CD4-positive, alpha-beta T cell (primary cell): ENCODE measurements at regions of chr9 and their contacts with region 1.

Region 1: DNA sequence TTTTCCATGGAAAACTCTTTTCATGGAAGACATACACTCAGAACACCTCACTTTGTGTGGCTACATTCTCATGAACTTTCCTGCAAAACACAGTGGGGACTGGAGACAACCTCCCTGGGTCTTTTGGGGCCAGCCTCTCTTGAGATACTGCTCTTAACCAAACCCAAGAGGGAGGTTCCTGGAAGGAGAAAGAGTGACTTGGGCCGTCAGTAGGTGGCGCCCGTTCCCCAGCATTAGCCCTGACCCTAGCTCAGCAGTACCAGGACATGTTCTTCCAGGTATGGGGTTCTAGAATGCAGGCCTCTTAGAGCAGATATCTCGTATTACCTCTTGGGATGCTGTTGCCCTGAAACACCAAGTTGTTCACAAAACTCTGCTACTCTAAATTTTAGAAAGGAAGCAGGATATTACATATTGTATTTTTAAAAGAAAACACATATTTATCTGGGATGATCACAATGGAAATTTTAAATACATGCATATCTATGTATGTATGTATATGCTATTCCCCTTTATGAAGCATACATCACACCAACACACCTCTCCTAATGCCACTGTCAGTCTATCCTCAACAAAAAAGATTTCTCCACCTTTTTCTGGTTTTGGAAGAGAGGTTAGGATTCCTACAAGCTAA is 15.8 kb upstream of the GLIS3 start:
- DNase-seq: peak; percentile 52 to 83 (median 64)
- ATAC-seq: peak; percentile 90
- H3K4me3 ChIP-seq: no peak overlapping the region
- H3K4me3 Mint-ChIP-seq: no peak overlapping the region
- H3K27ac ChIP-seq: no peak overlapping the region
- H3K27ac Mint-ChIP-seq: no peak overlapping the region
- H3K4me1 ChIP-seq: no peaks in the 10 kb centered on the region
- H3K4me1 Mint-ChIP-seq: no peaks in the 10 kb centered on the region
- H3K27me3 ChIP-seq: no peaks in the 10 kb centered on the region
- H3K27me3 Mint-ChIP-seq: no peaks in the 10 kb centered on the region
- CTCF ChIP-seq: peak; percentile 78

Region 2: DNA sequence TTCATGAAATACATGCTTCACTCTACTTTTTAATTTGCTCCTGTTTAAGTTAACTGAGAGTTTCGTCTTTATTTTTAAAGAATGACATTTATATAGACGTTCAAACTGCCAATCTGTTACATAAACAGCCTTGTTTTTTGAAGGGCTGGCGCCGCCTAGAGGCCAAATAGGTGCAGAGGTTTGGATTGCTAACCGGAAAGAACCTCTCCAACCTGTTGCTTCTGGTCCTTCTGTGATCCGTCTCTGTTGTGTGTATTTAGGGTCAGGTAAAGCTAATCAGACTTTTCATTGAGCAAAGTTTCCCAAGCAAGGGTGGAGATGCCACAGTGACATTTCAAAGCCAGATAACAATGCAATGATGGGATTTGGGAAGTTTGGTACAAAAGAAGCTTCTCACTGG is 23.7 kb after region 1 on chr9:
- CTCF ChIA-PET with region 1: interaction called, 5 read pairs
- POLR2A ChIA-PET with region 1: no interaction called
- intact Hi-C with region 1: loop called (anchors 1 to 2 kb)
- DNase-seq: peak; percentile 65 to 85 (median 75)
- ATAC-seq: peak; percentile 94
- H3K4me3 ChIP-seq: no peak overlapping the region
- H3K4me3 Mint-ChIP-seq: peak overlapping the region; percentile 26
- H3K27ac ChIP-seq: no peak overlapping the region
- H3K27ac Mint-ChIP-seq: peak overlapping the region; percentile 44
- H3K4me1 ChIP-seq: peaks cover 4% of the 10 kb centered on the region
- H3K4me1 Mint-ChIP-seq: peaks cover 7% of the 10 kb centered on the region
- H3K27me3 ChIP-seq: no peaks in the 10 kb centered on the region
- H3K27me3 Mint-ChIP-seq: no peaks in the 10 kb centered on the region
- CTCF ChIP-seq: peak; percentile 85

Region 3: GRCh38 chr9:4353236-4353635 is 37.5 kb after region 1 on chr9:
- CTCF ChIA-PET with region 1: no interaction called
- POLR2A ChIA-PET with region 1: no interaction called
- intact Hi-C with region 1: no loop called
- DNase-seq: no peak
- ATAC-seq: no peak
- H3K4me3 ChIP-seq: no peak overlapping the region
- H3K4me3 Mint-ChIP-seq: no peak overlapping the region
- H3K27ac ChIP-seq: no peak overlapping the region
- H3K27ac Mint-ChIP-seq: no peak overlapping the region
- H3K4me1 ChIP-seq: no peaks in the 10 kb centered on the region
- H3K4me1 Mint-ChIP-seq: no peaks in the 10 kb centered on the region
- H3K27me3 ChIP-seq: no peaks in the 10 kb centered on the region
- H3K27me3 Mint-ChIP-seq: peaks cover 4% of the 10 kb centered on the region
- CTCF ChIP-seq: no peak

Region 4: DNA sequence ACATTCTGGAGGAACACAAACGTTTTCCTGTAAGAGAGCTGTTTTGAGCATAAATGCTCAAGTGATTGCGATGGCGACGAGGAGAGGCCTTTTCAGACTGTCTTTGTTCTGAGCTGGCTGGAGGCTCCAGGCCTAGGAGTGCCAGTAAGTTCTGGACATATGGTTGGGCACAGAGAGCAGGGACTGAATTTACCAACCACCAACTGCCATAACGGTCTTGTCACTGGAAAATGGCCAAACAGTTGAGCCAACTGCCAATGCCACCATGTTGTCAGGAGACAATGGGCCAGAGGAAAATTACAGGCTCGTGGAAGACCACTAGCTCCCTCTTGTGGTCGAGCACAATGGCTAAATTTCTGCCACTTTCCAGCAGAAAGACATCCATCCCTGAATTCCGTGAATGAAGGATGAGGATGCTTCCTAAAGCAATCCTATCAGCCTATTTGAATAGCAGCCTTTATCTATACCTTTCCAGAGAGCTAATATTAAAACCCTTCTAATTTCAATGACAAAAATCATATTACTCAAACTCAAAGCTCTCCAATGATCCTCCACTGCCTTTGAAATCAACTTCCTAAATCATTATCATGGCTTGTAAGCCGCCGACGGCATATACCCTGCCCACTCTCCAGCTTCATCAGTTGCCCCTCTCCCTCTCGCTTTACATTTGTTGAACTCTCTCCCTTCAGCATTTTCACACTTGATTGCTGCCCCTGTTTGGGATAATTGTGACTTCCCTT is 51.1 kb after region 1 on chr9:
- CTCF ChIA-PET with region 1: interaction called, 15 read pairs
- POLR2A ChIA-PET with region 1: no interaction called
- intact Hi-C with region 1: loop called (anchors 1 to 2 kb)
- DNase-seq: peak in 9 of 14 experiments; percentile 5 to 57 (median 16)
- ATAC-seq: no peak
- H3K4me3 ChIP-seq: no peak overlapping the region
- H3K4me3 Mint-ChIP-seq: no peak overlapping the region
- H3K27ac ChIP-seq: no peak overlapping the region
- H3K27ac Mint-ChIP-seq: no peak overlapping the region
- H3K4me1 ChIP-seq: no peaks in the 10 kb centered on the region
- H3K4me1 Mint-ChIP-seq: no peaks in the 10 kb centered on the region
- H3K27me3 ChIP-seq: no peaks in the 10 kb centered on the region
- H3K27me3 Mint-ChIP-seq: no peaks in the 10 kb centered on the region
- CTCF ChIP-seq: peak; percentile 54

Region 5: GRCh38 chr9:4375424-4376200 is 59.9 kb after region 1 on chr9:
- CTCF ChIA-PET with region 1: interaction called, 3 read pairs
- POLR2A ChIA-PET with region 1: no interaction called
- intact Hi-C with region 1: loop called in 1 of 2 experiments (anchors 2 kb)
- DNase-seq: peak in 3 of 14 experiments; percentile 14 to 45 (median 36)
- ATAC-seq: no peak
- H3K4me3 ChIP-seq: no peak overlapping the region
- H3K4me3 Mint-ChIP-seq: no peak overlapping the region
- H3K27ac ChIP-seq: no peak overlapping the region
- H3K27ac Mint-ChIP-seq: no peak overlapping the region
- H3K4me1 ChIP-seq: no peaks in the 10 kb centered on the region
- H3K4me1 Mint-ChIP-seq: no peaks in the 10 kb centered on the region
- H3K27me3 ChIP-seq: no peaks in the 10 kb centered on the region
- H3K27me3 Mint-ChIP-seq: peaks cover 15% of the 10 kb centered on the region
- CTCF ChIP-seq: no peak

Region 6: DNA sequence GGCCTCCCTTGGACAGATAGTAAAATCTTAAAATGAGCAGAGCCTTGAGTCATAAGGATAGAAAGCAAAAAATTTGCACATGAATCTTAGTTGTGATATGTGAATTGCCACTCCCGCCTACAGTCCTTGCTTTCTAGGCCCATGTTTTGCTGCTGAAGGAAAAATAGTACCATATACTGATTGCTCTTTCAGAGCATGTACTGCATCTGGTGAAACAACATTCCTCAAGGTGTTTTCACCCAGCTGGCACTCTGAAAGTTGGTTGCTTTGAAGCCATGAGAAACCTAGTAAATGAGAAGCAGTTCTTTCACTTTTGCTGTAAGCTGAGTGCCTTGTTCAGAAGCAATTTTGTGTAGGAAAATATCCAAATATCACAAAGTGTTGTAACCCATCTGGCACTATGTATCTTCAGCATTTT is 374.0 kb after region 1 on chr9:
- CTCF ChIA-PET with region 1: no interaction called
- POLR2A ChIA-PET with region 1: no interaction called
- intact Hi-C with region 1: no loop called
- DNase-seq: no peak
- ATAC-seq: no peak
- H3K4me3 ChIP-seq: no peak overlapping the region
- H3K4me3 Mint-ChIP-seq: no peak overlapping the region
- H3K27ac ChIP-seq: no peak overlapping the region
- H3K27ac Mint-ChIP-seq: peak overlapping the region; percentile 34
- H3K4me1 ChIP-seq: no peaks in the 10 kb centered on the region
- H3K4me1 Mint-ChIP-seq: peaks cover 63% of the 10 kb centered on the region
- H3K27me3 ChIP-seq: no peaks in the 10 kb centered on the region
- H3K27me3 Mint-ChIP-seq: no peaks in the 10 kb centered on the region
- CTCF ChIP-seq: no peak